ENCODE measurements at regions of chr20 and their contacts with region 1.

Region 1: GRCh38 chr20:50320910-50321796 is 130.5 kb downstream of the CEBPB start:
- DNase-seq: peak; percentile 94 to 95
- H3K4me3 ChIP-seq: peak overlapping the region; percentile 67
- H3K27ac ChIP-seq: peak overlapping the region; percentile 95
- H3K4me1 ChIP-seq: peaks cover 41% of the 10 kb centered on the region
- H3K27me3 ChIP-seq: no peaks in the 10 kb centered on the region
- CTCF ChIP-seq: no peak

Region 2: DNA sequence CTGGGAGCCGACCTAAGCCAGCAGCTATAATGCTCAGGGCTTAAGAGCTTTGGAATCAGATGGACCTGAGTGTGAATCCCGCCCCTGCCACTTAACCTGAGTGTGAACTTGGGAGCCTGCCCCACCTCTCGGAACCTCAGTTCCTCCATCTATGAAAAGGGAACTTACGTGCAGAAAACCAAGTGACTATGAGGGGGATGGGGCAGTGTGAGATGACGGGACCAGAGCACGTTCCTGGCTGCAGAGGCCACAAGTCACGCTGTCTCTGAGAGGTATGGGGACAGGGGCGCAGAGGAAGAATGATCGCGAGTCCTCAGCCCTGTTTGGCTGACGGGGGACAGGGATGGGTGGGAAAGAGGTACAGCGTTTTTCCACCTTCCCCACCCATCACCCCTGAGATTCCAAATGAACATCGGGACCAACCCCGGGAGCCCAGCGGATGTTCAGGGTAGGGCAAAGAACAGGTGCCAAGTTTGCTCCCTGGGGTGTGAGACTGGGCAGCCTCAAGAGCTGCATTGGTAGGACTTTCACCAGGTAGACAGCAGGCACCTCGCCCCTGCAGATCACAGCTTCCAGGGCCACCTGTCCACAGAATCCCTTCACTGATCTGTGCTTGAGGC is 44.9 kb before region 1 on chr20:
- CTCF ChIA-PET with region 1: interaction called, 18 read pairs
- POLR2A ChIA-PET with region 1: no interaction called
- intact Hi-C with region 1: no loop called
- DNase-seq: no peak
- H3K4me3 ChIP-seq: no peak overlapping the region
- H3K27ac ChIP-seq: no peak overlapping the region
- H3K4me1 ChIP-seq: peaks cover 30% of the 10 kb centered on the region; the same call in 1 of the 2 replicates
- H3K27me3 ChIP-seq: no peaks in the 10 kb centered on the region
- CTCF ChIP-seq: no peak

Region 3: DNA sequence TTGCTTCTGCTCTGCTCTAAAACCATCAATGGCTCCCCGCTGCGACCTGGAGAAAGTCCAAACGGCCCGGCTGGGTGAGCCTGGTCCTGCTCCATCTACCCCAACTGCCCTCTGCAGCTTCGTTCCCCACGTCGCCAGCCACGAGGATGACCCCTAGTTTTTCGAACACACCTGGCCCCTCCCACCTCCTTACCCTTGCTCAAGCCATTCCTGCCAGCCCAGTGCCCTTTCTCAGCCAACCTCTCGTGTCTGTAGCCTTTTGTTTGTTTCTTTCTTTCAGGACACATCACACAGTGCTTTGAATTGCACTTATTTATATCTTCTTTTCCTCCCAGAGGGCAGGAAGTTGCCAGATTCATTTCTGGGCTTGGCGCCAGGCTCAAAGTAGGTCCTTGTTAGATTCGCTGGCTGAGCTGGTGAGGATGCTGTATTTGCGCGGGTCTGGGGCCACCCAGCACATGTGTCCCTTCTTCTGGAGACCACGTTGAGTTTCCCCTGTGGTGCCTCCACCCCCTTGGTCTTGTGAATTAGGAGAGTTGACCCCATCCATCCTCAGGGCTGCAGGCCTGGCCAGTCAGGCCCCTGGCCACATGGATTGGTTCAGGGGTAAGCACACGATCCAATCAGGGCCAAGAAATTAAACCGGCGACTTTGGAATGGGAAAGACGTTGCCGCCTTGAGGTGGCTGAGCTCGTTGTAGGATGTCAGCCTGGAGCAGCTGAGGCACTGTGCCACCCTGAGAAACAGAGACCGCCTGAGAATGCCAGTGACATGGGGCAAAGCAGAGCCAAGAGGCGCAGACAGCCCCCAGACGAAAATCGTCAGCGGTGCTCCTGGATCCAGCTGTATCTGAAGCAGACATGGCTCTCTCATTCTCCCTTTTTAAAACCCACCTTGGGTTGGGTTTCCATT is 25.5 kb after region 1 on chr20:
- CTCF ChIA-PET with region 1: no interaction called
- POLR2A ChIA-PET with region 1: no interaction called
- intact Hi-C with region 1: no loop called
- DNase-seq: peak; percentile 58 to 62
- H3K4me3 ChIP-seq: no peak overlapping the region
- H3K27ac ChIP-seq: peak overlapping the region; percentile 25; the same call in 1 of the 2 replicates
- H3K4me1 ChIP-seq: peaks cover 61% of the 10 kb centered on the region
- H3K27me3 ChIP-seq: no peaks in the 10 kb centered on the region
- CTCF ChIP-seq: no peak

Region 4: DNA sequence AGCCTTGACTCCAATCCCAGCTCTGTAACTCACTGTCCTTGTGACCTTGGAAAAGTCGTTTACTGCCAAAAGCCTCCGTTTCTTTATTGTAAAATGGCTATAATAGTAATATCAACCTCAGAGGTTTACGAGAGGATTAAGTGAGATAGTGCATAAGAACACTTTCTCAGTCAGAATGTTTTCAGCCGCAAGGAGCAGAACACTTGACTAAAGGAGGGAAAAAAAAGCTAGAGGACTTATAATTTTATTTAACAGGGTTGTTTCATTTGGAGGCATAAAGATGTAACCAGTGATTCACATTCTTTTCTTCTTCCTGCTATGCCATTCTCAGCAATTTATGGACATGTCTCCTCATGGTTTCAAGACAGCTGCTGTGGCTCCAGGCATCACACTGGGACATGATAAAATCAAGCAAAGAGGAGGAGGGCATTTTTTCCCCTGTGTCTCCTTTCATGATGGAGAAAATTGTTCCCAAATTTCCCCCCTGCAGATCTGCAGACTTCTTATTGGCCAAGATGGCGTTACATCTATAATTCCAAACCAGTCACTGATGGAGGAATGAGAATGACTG is 46.0 kb after region 1 on chr20:
- CTCF ChIA-PET with region 1: no interaction called
- POLR2A ChIA-PET with region 1: no interaction called
- intact Hi-C with region 1: no loop called
- DNase-seq: no peak
- H3K4me3 ChIP-seq: no peak overlapping the region
- H3K27ac ChIP-seq: peak overlapping the region; percentile 30
- H3K4me1 ChIP-seq: peaks cover 34% of the 10 kb centered on the region
- H3K27me3 ChIP-seq: no peaks in the 10 kb centered on the region
- CTCF ChIP-seq: no peak

Region 5: GRCh38 chr20:50415516-50416113 is 94.5 kb after region 1 on chr20:
- CTCF ChIA-PET with region 1: no interaction called
- POLR2A ChIA-PET with region 1: interaction called, 5 read pairs
- intact Hi-C with region 1: loop called (anchors 1 kb)
- DNase-seq: peak; percentile 85 to 97
- H3K4me3 ChIP-seq: peak overlapping the region; percentile 27; the same call in 1 of the 2 replicates
- H3K27ac ChIP-seq: peak overlapping the region; percentile 90
- H3K4me1 ChIP-seq: peaks cover 64% of the 10 kb centered on the region
- H3K27me3 ChIP-seq: no peaks in the 10 kb centered on the region
- CTCF ChIP-seq: no peak; the same call in 1 of the 2 replicates

Region 6: GRCh38 chr20:50784464-50784863 is 463.3 kb after region 1 on chr20:
- CTCF ChIA-PET with region 1: no interaction called
- POLR2A ChIA-PET with region 1: no interaction called
- intact Hi-C with region 1: loop called (anchors 5 kb)
- DNase-seq: no peak
- H3K4me3 ChIP-seq: no peak overlapping the region
- H3K27ac ChIP-seq: no peak overlapping the region
- H3K4me1 ChIP-seq: no peaks in the 10 kb centered on the region
- H3K27me3 ChIP-seq: no peaks in the 10 kb centered on the region
- CTCF ChIP-seq: no peak